H1 (cell line): ENCODE measurements at regions of chr5 and their contacts with region 1.

Region 1: DNA sequence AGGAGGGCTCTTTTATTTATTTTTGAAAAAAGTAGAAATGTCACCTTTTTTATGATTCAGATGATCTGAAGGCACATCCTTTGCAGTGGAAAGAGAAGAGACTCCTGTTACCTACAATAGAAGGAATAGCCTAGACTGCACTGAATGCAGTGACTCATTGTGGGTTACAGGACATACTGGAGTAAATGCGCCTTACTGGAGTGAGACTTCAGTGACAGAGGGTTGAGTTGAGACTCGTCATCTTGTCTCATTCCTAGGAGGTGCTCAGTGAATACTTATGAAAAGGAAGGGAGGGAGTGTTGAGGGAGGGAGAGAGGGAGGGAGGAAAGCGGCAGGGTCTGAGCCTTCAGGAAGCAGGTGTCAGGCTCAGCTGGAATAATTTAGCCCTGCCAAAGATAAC is 25.2 kb downstream of the ANKRA2 start:
- DNase-seq: no peak
- H3K4me3 ChIP-seq: no peak overlapping the region
- H3K27ac ChIP-seq: no peak overlapping the region
- H3K4me1 ChIP-seq: no peaks in the 10 kb centered on the region
- H3K27me3 ChIP-seq: no peaks in the 10 kb centered on the region
- CTCF ChIP-seq: no peak
- EP300 ChIP-seq: no peak
- POLR2A ChIP-seq: no peak
- RAD21 ChIP-seq: no peak

Region 2: GRCh38 chr5:73469878-73470277 is 70.3 kb before region 1 on chr5:
- CTCF ChIA-PET with region 1: no interaction called
- POLR2A ChIA-PET with region 1: no interaction called
- DNase-seq: no peak
- H3K4me3 ChIP-seq: no peak overlapping the region
- H3K27ac ChIP-seq: no peak overlapping the region
- H3K4me1 ChIP-seq: peaks cover 0 to 2% (median under 1%) of the 10 kb centered on the region in 4 experiments; a peak in 3 of 7 replicates
- H3K27me3 ChIP-seq: no peaks in the 10 kb centered on the region; a peak in 1 of 7 replicates
- CTCF ChIP-seq: no peak
- EP300 ChIP-seq: no peak
- POLR2A ChIP-seq: no peak
- RAD21 ChIP-seq: no peak

Region 3: DNA sequence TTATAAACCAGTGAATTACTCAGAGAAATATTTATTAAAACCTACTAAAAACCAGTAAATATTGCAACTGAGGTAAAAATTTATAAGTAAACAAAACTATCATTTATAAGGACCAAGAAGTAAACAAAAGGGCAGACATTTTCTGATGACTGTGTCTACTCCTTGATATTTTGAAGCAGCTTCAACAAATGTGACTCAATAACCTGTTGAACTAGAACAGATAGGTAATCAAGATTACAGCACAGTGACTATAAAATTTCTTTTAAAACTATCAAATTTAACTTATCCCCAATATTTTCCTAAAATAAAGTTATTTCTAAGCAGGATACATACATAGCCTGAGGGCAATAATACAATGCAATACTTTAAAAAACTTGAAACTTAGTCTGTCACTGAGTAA is 12.4 kb after region 1 on chr5:
- CTCF ChIA-PET with region 1: interaction called, 25 read pairs
- POLR2A ChIA-PET with region 1: no interaction called
- DNase-seq: no peak
- H3K4me3 ChIP-seq: no peak overlapping the region
- H3K27ac ChIP-seq: no peak overlapping the region
- H3K4me1 ChIP-seq: no peaks in the 10 kb centered on the region
- H3K27me3 ChIP-seq: no peaks in the 10 kb centered on the region
- CTCF ChIP-seq: no peak
- EP300 ChIP-seq: no peak
- POLR2A ChIP-seq: no peak
- RAD21 ChIP-seq: no peak

Region 4: DNA sequence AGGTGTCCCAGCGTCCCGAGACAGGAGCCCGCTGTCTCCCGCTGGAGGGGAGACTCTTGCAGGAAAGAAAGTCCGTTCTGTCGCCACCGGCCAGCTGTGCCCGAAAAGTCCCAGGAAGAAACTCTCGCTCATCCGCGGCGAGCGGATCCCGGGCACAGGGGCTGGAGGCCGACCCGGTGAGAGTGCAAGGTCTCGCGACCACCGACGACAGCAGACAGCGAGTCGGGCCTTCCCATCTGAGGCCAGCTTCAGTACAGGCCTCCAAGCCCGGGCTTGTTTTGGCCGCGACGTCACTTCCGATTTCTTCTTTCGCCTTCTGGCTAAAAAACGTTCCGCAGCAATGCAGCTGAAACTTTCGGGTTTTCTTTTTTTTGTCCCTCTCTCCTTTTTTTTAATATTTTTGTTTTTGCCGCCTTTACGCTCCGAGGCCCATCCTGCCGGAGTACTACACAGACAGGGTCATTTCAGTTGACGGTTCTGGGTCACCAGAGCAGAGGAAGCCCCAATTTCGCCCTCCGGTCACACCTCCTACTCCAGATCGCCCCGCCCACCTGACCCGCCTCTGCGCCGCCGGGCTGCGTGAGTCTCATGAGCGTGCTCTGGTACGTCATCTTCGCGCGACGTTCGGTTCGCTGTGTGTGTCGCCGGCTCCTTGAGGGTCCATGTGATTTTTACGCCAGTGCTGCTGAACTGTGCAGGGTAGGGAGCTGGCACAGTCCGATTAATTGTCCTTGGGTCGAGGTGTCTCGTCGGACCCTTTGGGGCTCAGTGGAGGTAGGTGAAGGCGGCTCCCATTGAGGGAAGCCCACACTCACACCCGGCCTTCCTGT is 25.2 kb after region 1 on chr5 and contains the starts of genes ANKRA2 and UTP15:
- CTCF ChIA-PET with region 1: interaction called, 12 read pairs
- POLR2A ChIA-PET with region 1: no interaction called
- DNase-seq: peak; percentile 92 to 99
- H3K4me3 ChIP-seq: peak within 1 kb of the TSS; percentile 85 to 99 (median 93)
- H3K27ac ChIP-seq: peak within 1 kb of the TSS; percentile 73
- H3K4me1 ChIP-seq: peaks cover 0 to 3% (median 0%) of the 10 kb centered on the region in 4 experiments; a peak in 1 of 7 replicates
- H3K27me3 ChIP-seq: no peaks in the 10 kb centered on the region
- CTCF ChIP-seq: no peak
- EP300 ChIP-seq: no peak
- POLR2A ChIP-seq: peak; percentile 85 to 86
- RAD21 ChIP-seq: no peak
- total RNA-seq, gene ANKRA2: 10.3 and 12.6 TPM in 2 replicates
- total RNA-seq, gene UTP15: 33.6 and 35.1 TPM in 2 replicates